ENCODE measurements at regions of chr3 and their contacts with region 1.

Region 1: DNA sequence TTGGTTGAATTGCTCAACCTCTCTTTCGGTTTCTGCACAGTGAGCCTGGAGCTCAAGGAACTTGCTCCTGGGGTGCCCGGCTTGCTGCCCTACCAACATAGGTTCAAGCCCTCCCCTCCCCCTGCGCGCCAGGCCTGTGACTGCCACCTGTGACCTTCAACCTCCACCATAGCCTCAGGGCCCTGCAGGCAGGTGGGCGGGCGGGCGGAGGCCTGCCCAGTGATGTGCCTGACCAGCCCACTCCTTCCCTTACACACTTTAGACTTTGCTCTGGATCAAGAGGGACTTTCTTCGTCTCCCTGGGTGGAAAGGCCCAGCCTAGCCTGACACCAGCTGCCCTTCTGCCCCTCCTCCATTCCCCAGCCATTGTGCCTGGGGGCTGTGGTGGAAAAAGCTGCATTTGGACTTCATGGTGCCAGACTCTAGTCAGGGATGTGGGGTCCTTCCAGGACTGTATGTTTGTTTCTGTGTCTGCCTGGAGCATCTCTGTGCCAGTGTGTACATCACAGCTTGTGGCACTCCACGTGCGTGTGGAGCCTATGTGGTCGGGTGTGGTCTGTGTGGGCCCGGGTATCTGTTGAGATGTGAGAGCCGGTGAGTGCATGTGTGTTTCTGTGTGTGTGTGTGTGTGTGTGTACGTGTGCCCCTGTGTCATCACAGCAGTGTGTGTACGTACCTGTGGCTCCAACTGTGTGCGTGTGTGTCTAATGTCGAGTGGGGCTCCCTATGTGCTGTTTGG is 9.5 kb downstream of the PRKCD start:
- DNase-seq: peak; percentile 51
- ATAC-seq: peak; percentile 27
- H3K4me3 ChIP-seq: peak overlapping the region in 1 of 3 experiments; percentile 42; a peak in 2 of 6 replicates
- H3K27ac ChIP-seq: peak overlapping the region; percentile 76
- H3K4me1 ChIP-seq: peaks cover 62% of the 10 kb centered on the region
- H3K27me3 ChIP-seq: no peaks in the 10 kb centered on the region
- CTCF ChIP-seq: no peak
- EP300 ChIP-seq: 0 out of 4 replicates have a peak, but pooled peaks of 1 of the 2 experiments have one; percentile 15
- POLR2A ChIP-seq: peak in 1 of 2 experiments; percentile 36; a peak in 2 of 4 replicates
- RAD21 ChIP-seq: no peak

Region 2: DNA sequence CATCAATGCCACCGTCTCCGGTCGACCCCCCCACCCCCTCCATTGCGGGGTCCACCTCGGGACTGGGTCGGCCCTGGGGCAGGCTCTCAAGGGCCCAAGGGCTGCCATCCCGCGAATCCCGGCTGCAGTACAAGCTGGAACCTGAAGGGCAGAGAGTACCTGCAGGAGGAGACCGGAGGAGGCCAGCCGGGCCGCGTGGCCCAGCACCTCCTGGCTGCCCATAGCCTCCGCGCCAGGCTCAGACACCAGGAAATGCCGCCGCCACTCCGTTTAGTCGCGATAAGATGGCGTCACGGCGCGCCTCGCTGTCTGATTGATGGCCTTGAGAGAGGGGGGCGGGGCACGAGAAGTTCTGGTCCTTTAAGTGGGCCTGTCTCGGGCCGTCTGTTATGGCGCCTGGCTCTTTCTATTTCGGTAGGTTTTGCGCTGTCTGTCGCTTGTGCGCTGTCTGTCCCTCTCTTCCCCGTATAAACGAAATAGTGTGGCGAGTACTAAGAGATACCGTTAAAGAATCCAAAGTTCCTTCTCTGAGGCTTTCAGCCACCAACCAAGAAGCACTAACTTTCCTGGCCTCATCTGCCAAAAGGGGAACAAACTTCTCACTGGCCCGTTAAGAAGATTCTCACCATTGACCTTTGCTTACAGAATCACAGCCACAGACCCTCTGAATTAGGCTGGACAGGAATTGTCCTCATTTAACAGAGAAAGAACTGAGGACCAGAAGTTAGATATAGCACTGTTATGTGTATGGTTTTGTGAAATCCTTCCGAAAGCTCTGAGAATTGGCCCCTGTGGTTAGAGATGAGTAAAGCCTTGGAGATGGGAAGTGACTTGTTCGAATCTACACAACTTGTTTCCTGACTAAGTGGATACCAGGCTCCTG is 40.1 kb before region 1 on chr3 and contains the start of gene RFT1:
- CTCF ChIA-PET with region 1: interaction called, 10 read pairs
- POLR2A ChIA-PET with region 1: interaction called, 54 read pairs
- in situ Hi-C with region 1: no loop called
- intact Hi-C with region 1: loop called (anchors 5 kb)
- DNase-seq: peak; percentile 93
- ATAC-seq: peak; percentile 88
- H3K4me3 ChIP-seq: peak within 1 kb of the TSS; percentile 80 to 99 (median 86)
- H3K27ac ChIP-seq: peak within 1 kb of the TSS; percentile 75
- H3K4me1 ChIP-seq: peaks cover 52% of the 10 kb centered on the region
- H3K27me3 ChIP-seq: no peaks in the 10 kb centered on the region; a peak in 1 of 5 replicates
- CTCF ChIP-seq: no peak; the same call in 1 of the 2 replicates
- EP300 ChIP-seq: peak in 1 of 2 experiments; percentile 27; a peak in 1 of 4 replicates
- POLR2A ChIP-seq: peak; percentile 91
- RAD21 ChIP-seq: peak; percentile 23
- total RNA-seq, gene RFT1: 25.7 and 37.0 TPM in 2 replicates

Region 3: GRCh38 chr3:53150247-53151085 is 20.0 kb before region 1 on chr3:
- CTCF ChIA-PET with region 1: no interaction called
- POLR2A ChIA-PET with region 1: interaction called, 13 read pairs
- in situ Hi-C with region 1: no loop called
- intact Hi-C with region 1: no loop called
- DNase-seq: no peak
- ATAC-seq: no peak
- H3K4me3 ChIP-seq: no peak overlapping the region
- H3K27ac ChIP-seq: no peak overlapping the region
- H3K4me1 ChIP-seq: peaks cover 60% of the 10 kb centered on the region
- H3K27me3 ChIP-seq: peaks cover 2 to 57% of the 10 kb centered on the region in 2 experiments; a peak in 4 of 5 replicates
- CTCF ChIP-seq: no peak
- EP300 ChIP-seq: no peak
- POLR2A ChIP-seq: no peak
- RAD21 ChIP-seq: no peak

Region 4: GRCh38 chr3:53566461-53567145 is 396.1 kb after region 1 on chr3:
- CTCF ChIA-PET with region 1: no interaction called
- POLR2A ChIA-PET with region 1: no interaction called
- in situ Hi-C with region 1: no loop called
- intact Hi-C with region 1: no loop called
- DNase-seq: no peak
- ATAC-seq: no peak
- H3K4me3 ChIP-seq: no peak overlapping the region
- H3K27ac ChIP-seq: no peak overlapping the region
- H3K4me1 ChIP-seq: no peaks in the 10 kb centered on the region
- H3K27me3 ChIP-seq: no peaks in the 10 kb centered on the region
- CTCF ChIP-seq: no peak
- EP300 ChIP-seq: no peak
- POLR2A ChIP-seq: no peak
- RAD21 ChIP-seq: no peak